Activated T-helper 2 cell treated with anti-CD3 and anti-CD28 coated beads, Interferon-gamma antibody, Interleukin-2, Interleukin-4, amounts not matched to agents 10 μg/mL and 5 μg/mL and 100 μg/mL, durations not matched to agents 14 hours and 24 hours and 36 hours (primary cell): ENCODE measurements at regions of chr5 and their contacts with region 1.

Region 1: GRCh38 chr5:88883059-88883835 is at the start of gene MEF2C:
- DNase-seq: no peak
- H3K4me3 Mint-ChIP-seq: peak within 1 kb of the TSS; percentile 81
- H3K27ac Mint-ChIP-seq: no peak within 1 kb of the TSS
- H3K4me1 Mint-ChIP-seq: peaks cover 22% of the 10 kb centered on the region
- H3K27me3 Mint-ChIP-seq: peaks cover 70% of the 10 kb centered on the region
- total RNA-seq, gene MEF2C: 0.25 and 0.30 TPM in 2 replicates

Region 2: DNA sequence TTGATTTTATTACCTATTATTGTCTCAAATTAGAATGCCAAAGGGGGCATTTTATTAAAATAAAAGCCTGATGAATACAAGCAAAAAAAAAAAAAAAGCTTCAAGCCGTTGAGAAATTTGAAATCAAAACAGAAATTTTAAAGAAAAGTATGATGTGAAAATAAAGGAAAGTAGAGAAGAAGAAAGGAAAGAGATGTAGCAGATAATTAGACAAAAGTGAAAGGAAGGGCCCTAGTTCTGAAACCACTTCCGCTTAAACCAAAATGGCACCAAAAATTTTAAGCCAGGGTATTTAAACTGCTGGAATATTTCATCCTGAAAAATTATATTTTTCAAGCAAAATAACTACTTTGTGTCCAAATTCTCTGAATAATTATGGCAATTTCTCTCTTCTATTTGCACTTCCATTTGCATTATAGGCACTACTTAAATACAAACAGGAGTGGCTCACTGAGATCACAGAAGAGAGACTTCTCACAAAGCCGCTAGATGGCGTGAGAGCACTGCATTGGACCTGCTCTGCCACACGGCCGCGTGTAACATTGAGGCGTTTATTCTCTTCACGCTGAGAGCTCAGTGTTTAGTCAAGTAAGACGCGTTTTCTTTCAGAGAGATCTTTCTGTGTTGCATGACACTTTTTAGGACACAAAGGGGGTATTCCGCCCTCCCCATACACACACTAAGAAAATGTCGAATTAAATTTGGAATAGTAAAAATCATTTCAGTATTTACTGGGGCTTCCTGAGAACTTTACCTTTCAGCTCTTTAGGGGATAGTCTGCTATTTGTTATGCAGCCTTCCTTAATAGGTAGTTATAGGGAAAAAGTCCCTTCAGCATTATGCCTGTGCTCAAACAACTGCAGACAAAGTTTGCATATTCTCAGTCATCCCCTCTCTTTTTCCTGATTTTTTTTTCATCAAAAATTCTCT is 1102.2 kb before region 1 on chr5:
- intact Hi-C with region 1: loop called (anchors 10 kb)
- DNase-seq: peak; percentile 57
- H3K4me3 Mint-ChIP-seq: no peak overlapping the region
- H3K27ac Mint-ChIP-seq: no peak overlapping the region
- H3K4me1 Mint-ChIP-seq: peaks cover 3% of the 10 kb centered on the region
- H3K27me3 Mint-ChIP-seq: peaks cover 13% of the 10 kb centered on the region

Region 3: GRCh38 chr5:88140856-88141752 is 742.1 kb before region 1 on chr5:
- intact Hi-C with region 1: loop called (anchors 10 kb)
- DNase-seq: peak; percentile 94
- H3K4me3 Mint-ChIP-seq: no peak overlapping the region
- H3K27ac Mint-ChIP-seq: no peak overlapping the region
- H3K4me1 Mint-ChIP-seq: peaks cover 21% of the 10 kb centered on the region
- H3K27me3 Mint-ChIP-seq: peaks cover 37% of the 10 kb centered on the region

Region 4: DNA sequence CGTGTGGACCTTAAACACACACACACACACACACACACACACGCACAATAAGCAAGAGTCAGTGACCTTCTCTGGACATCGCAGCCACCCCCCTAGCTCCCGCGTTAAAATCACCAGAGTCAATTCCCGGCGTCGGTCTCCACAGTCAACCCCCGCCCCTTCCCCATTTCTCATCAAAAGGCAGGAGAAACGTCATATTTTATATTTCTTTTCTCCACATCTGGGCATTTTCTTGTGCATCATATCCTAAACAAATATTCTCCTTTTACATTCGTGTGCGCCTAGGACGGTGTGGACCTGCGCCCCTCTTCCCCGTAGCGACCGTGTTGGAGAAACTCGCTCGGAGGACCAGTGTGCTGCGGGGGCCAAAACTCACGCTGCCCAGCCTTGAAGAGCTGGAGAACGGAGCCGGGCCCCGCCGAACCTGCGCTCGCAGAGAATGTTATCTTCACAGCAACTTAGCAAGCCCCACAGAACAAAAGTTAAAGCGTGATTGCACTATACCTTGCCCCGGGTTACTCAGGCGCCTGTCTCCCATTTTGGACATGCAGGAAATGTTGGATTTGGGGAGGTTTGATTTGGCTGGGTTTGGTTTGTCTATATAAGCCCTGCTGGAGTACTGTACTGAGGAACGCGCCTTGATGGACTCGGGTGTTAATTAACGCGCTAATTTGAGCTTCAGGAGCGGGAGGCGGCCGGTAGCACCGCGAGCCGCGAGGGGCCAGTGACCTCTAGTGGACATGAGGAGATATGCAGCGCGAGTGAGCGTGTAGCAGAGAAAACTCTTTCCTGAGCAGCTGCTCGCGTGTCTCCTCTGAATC is 192.6 kb before region 1 on chr5:
- intact Hi-C with region 1: loop called (anchors 1 kb)
- DNase-seq: peak; percentile 60
- H3K4me3 Mint-ChIP-seq: no peak overlapping the region
- H3K27ac Mint-ChIP-seq: peak overlapping the region; percentile 73
- H3K4me1 Mint-ChIP-seq: peaks cover 7% of the 10 kb centered on the region
- H3K27me3 Mint-ChIP-seq: peaks cover 91% of the 10 kb centered on the region

Region 5: DNA sequence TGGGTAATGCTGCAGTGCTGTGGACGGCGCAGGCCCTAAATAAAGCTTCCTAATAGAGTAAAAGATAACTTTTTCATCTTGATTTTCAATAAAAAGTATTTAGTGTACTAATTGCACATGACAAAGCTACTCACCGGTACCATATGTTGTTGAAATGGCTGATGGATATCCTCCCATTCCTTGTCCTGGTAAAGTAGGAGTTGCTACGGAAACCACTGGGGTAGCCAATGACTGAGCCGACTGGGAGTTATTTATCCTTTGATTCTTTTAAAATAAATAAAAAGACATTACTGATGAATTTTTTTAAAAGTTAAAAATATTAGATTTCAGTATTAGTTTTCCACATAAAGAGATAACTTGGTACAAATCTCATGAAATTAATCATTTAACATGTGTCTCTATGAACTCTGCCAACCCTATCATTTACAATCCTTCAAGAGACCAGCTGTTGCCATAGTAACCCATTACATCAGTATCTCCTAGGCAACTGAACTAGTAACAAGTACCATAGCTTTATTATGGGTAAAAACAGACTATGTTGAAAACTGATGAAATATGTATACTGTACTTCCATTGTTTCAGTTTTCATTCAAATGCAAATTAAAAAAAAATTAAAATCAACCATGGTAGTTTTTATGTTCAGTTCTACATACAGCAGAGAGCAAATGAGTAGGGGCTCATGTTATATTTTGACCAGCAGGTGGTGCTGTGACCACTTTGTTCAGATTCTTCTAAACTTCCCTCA is 154.0 kb before region 1 on chr5:
- intact Hi-C with region 1: loop called (anchors 2 kb)
- DNase-seq: peak; percentile 34
- H3K4me3 Mint-ChIP-seq: no peak overlapping the region
- H3K27ac Mint-ChIP-seq: no peak overlapping the region
- H3K4me1 Mint-ChIP-seq: peaks cover 5% of the 10 kb centered on the region
- H3K27me3 Mint-ChIP-seq: peaks cover 12% of the 10 kb centered on the region

Region 6: DNA sequence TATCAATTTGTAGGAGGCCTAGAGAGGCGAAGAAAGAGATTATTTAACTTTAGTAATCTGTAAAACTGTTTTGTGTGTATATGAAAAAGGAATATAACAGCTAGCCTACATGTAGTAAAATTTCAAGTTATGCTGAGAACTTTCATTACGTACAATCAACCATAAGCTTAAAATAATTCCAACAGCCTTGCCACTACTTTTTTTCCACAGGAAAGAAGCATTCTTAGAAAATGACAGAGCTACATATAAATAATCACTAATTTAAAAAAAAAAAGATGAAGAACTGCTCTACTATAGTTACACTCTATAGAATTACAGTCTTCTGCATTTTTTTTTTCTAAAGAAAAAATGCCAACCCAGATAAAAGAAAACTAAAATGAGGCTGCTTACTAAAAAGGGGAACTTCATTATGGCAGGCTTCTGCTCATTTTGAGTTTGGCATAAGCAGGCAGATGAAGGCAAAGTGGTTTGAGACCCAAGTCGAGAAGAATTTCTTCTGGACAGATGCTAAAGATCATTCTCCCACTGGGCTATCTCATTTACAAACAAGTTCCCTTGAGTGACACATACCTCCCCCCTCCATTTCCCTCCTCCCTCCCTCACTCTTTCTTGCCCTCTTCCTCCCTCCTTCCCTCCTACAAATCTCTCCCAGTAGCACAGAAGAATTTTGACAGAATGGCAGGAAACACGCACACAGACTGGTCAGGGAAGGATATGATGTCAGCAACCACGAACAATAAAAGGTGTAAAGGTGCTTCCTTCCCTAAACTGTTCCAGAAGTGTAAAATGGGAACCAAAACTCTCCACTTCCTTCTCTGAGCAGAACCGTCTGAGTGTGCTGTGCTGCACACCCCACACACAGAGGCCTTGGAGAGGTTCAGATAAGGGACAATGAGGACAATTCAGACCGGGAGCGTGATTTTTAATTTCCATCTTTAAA is 56.3 kb before region 1 on chr5:
- intact Hi-C with region 1: loop called (anchors 5 kb)
- DNase-seq: no peak
- H3K4me3 Mint-ChIP-seq: no peak overlapping the region
- H3K27ac Mint-ChIP-seq: peak overlapping the region; percentile 68
- H3K4me1 Mint-ChIP-seq: peaks cover 30% of the 10 kb centered on the region
- H3K27me3 Mint-ChIP-seq: peaks cover 29% of the 10 kb centered on the region